ENCODE measurements at regions of chr19 and their contacts with region 1.

Region 1: DNA sequence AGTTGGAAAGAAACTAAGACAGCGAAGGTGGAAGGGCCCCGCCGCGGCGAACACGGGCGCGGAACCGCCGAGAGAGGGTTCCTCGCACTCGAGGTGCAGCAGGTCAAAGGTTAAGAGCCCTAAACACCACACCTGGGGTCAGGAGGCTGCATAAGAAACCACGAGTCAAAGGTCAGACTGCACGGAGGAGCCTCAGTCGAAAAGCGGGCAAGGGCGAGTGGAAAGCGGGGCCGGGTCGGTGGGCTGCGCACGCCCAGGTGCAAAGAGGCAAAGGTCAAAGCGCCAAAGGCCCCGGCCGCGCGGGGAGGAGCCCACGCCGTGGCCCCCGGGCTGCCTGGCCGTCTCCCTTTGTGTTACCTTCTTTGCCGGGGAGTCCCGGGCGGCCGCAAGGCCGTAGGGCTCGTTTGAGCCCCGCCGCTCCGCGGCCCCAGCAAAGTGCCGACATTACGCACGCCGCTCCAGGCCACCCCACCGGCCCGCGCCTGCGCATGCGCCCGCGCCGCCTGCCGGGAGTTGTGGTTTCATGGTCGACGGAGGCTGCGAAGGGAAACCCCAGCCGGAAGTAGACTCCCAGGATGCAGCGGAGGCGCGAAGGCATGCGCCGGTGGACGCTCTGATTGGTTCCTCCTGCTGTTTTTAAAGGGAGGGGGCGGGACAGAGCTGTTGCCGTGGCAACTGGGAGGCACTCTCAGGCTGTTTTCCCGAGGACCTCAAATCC is at the start of gene POLRMT:
- DNase-seq: peak; percentile 99
- H3K4me3 ChIP-seq: peak within 1 kb of the TSS; percentile 66 to 97 (median 91)
- H3K27ac ChIP-seq: peak within 1 kb of the TSS; percentile 65 to 81 (median 78)
- H3K4me1 ChIP-seq: peaks cover 20 to 54% (median 42%) of the 10 kb centered on the region in 4 donors
- H3K27me3 ChIP-seq: no peaks in the 10 kb centered on the region
- CTCF ChIP-seq: peak in 1 of 3 experiments; percentile 14
- EP300 ChIP-seq: no peak
- POLR2A ChIP-seq: no peak
- total RNA-seq, gene POLRMT: 20.8 to 40.7 (median 30.4) TPM

Region 2: DNA sequence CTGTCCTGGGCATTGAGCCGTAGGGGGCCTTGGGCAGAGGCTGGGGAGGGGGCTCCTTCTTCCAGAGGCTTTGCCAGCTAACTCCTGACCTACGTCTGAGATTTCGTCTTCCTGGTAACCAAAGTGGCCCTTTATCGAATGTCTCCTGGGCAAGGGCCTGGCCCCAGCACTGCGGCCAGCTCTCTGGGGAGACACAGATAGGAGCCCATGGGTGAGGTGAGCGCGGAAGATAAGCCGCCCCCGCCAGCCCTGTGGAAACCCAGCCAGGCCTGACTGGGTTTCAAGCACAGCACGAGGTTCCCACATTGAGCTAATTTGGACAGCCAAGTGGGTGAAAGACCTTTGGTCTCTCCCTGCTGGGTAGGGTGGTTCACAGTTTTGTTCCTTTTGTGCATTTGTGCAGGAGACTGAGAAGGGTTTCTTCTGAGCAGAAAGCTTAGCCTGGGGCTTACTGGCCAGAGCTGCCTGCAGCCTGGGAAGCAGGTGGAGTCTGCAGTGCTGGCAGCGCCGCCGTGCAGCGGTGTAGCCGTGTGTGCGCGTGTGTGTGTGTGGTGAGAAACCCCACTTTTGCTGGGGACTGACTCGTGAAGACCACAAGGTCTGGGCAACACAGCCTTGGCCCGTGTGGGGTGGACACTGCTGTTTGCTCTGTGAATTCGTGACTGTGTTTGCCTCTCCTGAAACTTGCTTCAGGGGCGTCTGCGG is 58.4 kb before region 1 on chr19:
- intact Hi-C with region 1: loop called (anchors 5 kb)
- DNase-seq: no peak
- H3K4me3 ChIP-seq: peak overlapping the region; percentile 14 to 51 (median 40)
- H3K27ac ChIP-seq: peak overlapping the region; percentile 38 to 74 (median 68)
- H3K4me1 ChIP-seq: peaks cover 54 to 67% (median 59%) of the 10 kb centered on the region in 4 donors
- H3K27me3 ChIP-seq: no peaks in the 10 kb centered on the region
- CTCF ChIP-seq: no peak
- EP300 ChIP-seq: no peak
- POLR2A ChIP-seq: no peak

Region 3: GRCh38 chr19:737581-738093 is 104.4 kb after region 1 on chr19:
- intact Hi-C with region 1: no loop called
- DNase-seq: no peak
- H3K4me3 ChIP-seq: no peak overlapping the region
- H3K27ac ChIP-seq: no peak overlapping the region
- H3K4me1 ChIP-seq: peaks cover 0 to 17% (median 9%) of the 10 kb centered on the region in 4 donors
- H3K27me3 ChIP-seq: no peaks in the 10 kb centered on the region
- CTCF ChIP-seq: peak; percentile 39 to 66 (median 50)
- EP300 ChIP-seq: no peak
- POLR2A ChIP-seq: no peak